ENCODE measurements at regions of chr13 and their contacts with region 1.

Region 1: DNA sequence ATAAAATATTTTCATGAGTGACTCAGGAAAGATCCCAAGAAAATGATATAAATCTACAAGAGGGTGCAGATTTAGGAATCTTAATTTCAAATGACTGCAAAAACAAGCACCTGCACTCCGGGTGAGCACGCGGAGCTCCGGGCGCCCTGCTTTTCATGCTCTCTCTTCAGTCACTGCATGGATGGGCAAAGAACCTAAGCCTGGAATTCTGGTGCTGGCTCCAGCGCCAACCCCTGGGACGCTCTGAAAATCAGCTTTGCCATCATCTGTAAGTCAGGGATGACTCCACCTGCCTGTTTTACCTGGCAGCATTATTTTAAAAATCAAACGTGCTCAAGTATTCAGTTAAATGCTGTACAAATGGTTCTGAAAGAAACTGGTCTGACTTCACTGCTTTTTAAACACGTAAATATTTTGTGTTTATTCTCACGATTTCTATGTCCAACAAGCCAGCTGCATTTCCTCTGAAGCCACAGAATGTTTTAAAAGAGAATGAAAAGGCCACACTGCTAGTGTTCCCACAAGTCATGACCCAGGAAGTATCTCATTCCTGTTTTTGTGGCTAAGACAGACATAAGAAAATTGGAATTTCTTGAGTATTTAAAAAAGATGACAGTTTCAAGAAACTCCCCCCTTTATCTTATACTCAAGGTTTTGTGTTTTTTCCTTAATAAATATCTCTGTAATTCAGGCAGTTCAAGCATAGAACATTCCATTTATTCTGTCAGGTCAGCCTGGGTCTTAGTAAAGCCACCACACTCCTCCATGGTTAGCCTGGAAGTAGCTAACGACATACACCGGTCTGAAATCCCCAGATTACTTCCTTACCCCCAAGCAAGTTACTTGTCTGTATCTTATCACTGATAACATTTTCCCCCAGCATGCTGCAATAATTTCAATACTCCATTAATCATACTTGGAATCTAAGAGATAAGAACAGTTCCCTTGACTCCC is 81.1 kb downstream of the COL4A1 start:
- DNase-seq: no peak
- ATAC-seq: no peak
- H3K4me3 ChIP-seq: no peak overlapping the region
- H3K27ac ChIP-seq: peak overlapping the region; percentile 31
- H3K4me1 ChIP-seq: peaks cover 8% of the 10 kb centered on the region
- H3K27me3 ChIP-seq: no peaks in the 10 kb centered on the region
- CTCF ChIP-seq: no peak

Region 2: DNA sequence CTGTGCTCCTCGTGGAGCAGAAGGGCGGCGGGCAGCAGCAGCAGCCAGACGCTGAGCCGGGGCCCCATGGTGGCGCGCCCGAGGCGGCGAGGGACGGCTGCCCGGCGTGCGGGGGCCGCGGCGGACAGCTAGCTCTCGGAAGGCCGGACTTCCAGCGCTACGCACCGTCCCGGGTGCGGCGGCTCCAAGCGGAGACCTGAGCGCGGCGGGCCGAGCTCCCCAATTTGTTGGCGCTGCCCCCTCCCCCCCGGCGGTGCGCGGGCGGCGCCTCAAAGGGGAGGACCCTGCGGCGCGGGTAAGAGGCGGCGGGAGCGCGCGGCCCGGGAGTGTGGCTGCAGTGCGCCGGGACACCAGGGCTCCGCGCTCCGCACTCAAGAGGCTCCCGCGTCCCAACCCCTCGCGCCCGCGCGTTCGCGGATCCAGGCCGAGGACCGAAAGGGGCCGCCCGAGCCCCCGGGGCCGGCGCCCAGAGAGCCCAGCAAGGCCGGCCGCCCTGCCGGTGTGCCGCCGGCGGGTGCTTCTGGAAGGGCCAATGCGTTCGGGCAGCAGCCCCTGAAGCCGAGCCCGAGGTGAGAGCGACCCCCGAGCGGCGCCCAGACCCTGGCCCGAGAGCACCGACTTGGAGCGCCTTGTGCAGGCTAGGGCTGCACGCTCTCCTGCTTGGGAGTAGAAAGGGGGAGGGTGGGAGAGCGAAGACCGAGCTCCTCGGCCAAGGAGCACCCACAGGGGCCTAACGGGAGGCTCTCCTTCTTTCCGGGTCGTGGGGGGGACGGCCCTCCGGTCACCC is 81.3 kb after region 1 on chr13 and contains the starts of genes COL4A1 and COL4A2:
- intact Hi-C with region 1: loop called (anchors 10 kb)
- DNase-seq: peak; percentile 78
- ATAC-seq: peak; percentile 87
- H3K4me3 ChIP-seq: peak within 1 kb of the TSS; percentile 71
- H3K27ac ChIP-seq: peak within 1 kb of the TSS; percentile 89
- H3K4me1 ChIP-seq: peaks cover 32% of the 10 kb centered on the region
- H3K27me3 ChIP-seq: peaks cover 25% of the 10 kb centered on the region
- CTCF ChIP-seq: no peak
- total RNA-seq, gene COL4A1: 242 TPM
- total RNA-seq, gene COL4A2: 273 TPM

Region 3: GRCh38 chr13:110412132-110412914 is 186.4 kb after region 1 on chr13:
- intact Hi-C with region 1: loop called (anchors 10 kb)
- DNase-seq: peak; percentile 85
- ATAC-seq: peak; percentile 91
- H3K4me3 ChIP-seq: no peak overlapping the region
- H3K27ac ChIP-seq: peak overlapping the region; percentile 55
- H3K4me1 ChIP-seq: peaks cover 45% of the 10 kb centered on the region
- H3K27me3 ChIP-seq: no peaks in the 10 kb centered on the region
- CTCF ChIP-seq: peak; percentile 91